Right ventricle myocardium superior (tissue), 1 donor: ENCODE measurements at regions of chr3 and their contacts with region 1.

Region 1: DNA sequence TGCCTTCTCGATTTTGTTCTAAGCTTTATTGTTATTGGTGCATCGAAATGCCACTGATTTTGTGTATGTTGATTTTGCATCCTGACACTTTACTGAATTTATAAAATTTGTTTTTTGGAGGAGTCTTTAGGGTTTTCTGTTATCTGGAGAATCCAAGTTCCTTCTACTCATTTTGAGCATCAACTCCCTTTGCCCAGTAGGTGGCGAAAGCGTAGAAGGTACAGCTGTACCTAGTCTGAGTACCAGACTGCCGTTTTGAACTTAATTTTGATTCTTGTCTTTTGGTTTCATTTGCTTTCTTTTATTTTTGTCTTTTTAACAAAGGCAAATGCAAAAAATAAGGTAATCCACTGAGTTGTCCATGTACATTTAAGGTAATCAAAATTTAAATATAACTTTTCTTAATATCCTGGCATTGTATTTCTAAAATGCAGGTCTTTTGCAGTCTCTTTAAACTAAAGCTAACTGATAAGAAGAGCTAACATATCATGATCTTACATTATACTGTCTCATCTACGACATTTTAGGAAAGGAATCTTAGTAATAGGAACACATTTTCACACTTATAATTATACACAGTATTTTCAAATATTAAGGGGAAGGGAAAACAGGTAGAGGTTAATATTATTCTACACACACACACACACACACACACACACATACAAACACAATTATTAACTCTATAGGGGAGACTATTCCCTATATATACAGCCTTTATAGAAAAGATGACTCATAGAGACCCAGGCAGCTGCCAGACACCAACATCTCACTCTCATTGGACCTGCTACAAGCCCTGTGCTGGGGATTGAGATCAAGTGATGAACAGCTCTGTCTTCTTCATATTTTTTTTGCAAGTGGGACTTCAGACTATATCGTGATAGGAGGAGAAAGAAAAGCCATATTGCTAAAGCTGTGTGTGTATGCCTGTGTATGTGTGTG is 71.7 kb downstream of the SYNPR start:
- DNase-seq: no peak
- ATAC-seq: peak; percentile 67

Region 2: DNA sequence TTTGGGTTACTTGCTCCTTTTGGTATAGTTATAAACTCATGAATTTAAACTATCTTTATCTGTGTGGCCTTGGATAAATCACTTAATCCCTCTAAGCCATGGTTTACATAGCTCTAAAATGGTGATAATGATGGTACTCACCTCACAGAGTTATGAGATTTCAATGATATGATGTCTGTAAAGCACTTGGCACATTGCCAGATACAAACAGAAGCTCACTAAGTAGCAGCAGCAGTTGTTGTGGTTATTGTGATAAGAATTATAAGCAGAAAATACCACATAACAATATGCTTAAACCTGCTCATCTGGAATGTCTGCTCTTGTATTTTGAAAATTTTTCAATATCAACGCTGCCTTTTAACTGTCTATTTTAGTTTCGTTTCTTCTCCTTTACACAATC is 117.6 kb after region 1 on chr3:
- intact Hi-C with region 1: no loop called
- DNase-seq: no peak
- ATAC-seq: no peak

Region 3: GRCh38 chr3:63818281-63819150 is 468.7 kb after region 1 on chr3:
- intact Hi-C with region 1: loop called (anchors 2 kb)
- DNase-seq: no peak
- ATAC-seq: peak; percentile 69